Heart left ventricle (tissue), 16 donors: ENCODE measurements at regions of chr10 and their contacts with region 1.

Region 1: GRCh38 chr10:92880233-92880861 is 32.0 kb downstream of the EXOC6 start:
- DNase-seq: peak in 1 of 5 donors; percentile 13
- ATAC-seq: peak in 3 of 4 donors; percentile 57 to 69 (median 59)
- H3K4me3 ChIP-seq: no peak overlapping the region
- H3K27ac ChIP-seq: no peak overlapping the region
- H3K4me1 ChIP-seq: peaks cover 0 to 31% (median 0%) of the 10 kb centered on the region in 12 donors
- H3K27me3 ChIP-seq: no peaks in the 10 kb centered on the region
- CTCF ChIP-seq: peak in 11 of 12 donors; percentile 33 to 76 (median 53)
- POLR2A ChIP-seq: no peak

Region 2: GRCh38 chr10:92517034-92517655 is 363.2 kb before region 1 on chr10:
- intact Hi-C with region 1: loop called (anchors 2 to 10 kb)
- DNase-seq: peak in 3 of 5 donors; percentile 55 to 69 (median 61)
- ATAC-seq: peak; percentile 73 to 85 (median 82)
- H3K4me3 ChIP-seq: no peak overlapping the region
- H3K27ac ChIP-seq: no peak overlapping the region
- H3K4me1 ChIP-seq: peaks cover 0 to 3% (median 0%) of the 10 kb centered on the region in 12 donors
- H3K27me3 ChIP-seq: no peaks in the 10 kb centered on the region
- CTCF ChIP-seq: peak; percentile 69 to 85 (median 80)
- POLR2A ChIP-seq: no peak

Region 3: GRCh38 chr10:92592761-92593618 is 287.4 kb before region 1 on chr10 and contains the start of gene KIF11:
- intact Hi-C with region 1: loop called in 3 of 10 experiments (anchors 5 to 10 kb)
- DNase-seq: peak; percentile 97 to 99 (median 98)
- ATAC-seq: peak; percentile 96 to 97 (median 96)
- H3K4me3 ChIP-seq: peak within 1 kb of the TSS; percentile 35 to 94 (median 69)
- H3K27ac ChIP-seq: peak within 1 kb of the TSS; percentile 75 to 97 (median 93)
- H3K4me1 ChIP-seq: peaks cover 0 to 29% (median 12%) of the 10 kb centered on the region in 12 donors
- H3K27me3 ChIP-seq: no peaks in the 10 kb centered on the region
- CTCF ChIP-seq: peak in 1 of 12 donors; percentile 11
- POLR2A ChIP-seq: peak in 1 of 2 donors; percentile 80
- total RNA-seq, gene KIF11: 0.13 to 7.0 (median 0.76) TPM

Region 4: GRCh38 chr10:92839191-92840085 is 40.9 kb before region 1 on chr10:
- intact Hi-C with region 1: loop called in 8 of 10 experiments (anchors 5 kb)
- DNase-seq: peak; percentile 62 to 88 (median 69)
- ATAC-seq: peak in 3 of 4 donors; percentile 20 to 71 (median 46)
- H3K4me3 ChIP-seq: no peak overlapping the region
- H3K27ac ChIP-seq: peak overlapping the region in 9 of 12 donors; percentile 19 to 75 (median 63)
- H3K4me1 ChIP-seq: peaks cover 0 to 23% (median 9%) of the 10 kb centered on the region in 12 donors
- H3K27me3 ChIP-seq: no peaks in the 10 kb centered on the region
- CTCF ChIP-seq: peak in 7 of 12 donors; percentile 26 to 52 (median 38)
- POLR2A ChIP-seq: no peak

Region 5: DNA sequence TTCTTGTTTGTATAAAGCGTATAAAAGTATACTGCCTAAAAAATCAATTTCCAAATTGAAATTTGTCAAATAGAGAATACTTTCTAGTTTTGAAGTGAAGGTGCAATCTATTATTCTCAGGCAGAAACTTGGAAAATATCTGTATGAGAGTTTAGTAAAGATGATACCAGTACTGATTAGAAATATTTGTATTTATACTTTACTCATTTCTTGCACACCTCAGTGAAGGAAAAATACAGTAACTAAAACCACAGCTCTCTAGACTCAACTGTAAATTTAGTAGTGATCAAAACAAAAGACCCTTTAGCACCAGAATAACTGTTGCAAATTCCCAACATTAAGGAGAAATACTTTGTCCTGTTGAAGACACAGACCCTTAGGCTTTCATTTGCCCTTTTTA is 108.9 kb after region 1 on chr10:
- intact Hi-C with region 1: no loop called
- DNase-seq: no peak
- ATAC-seq: no peak
- H3K4me3 ChIP-seq: no peak overlapping the region
- H3K27ac ChIP-seq: no peak overlapping the region
- H3K4me1 ChIP-seq: no peaks in the 10 kb centered on the region
- H3K27me3 ChIP-seq: no peaks in the 10 kb centered on the region
- CTCF ChIP-seq: no peak
- POLR2A ChIP-seq: no peak

Region 6: GRCh38 chr10:93006435-93007039 is 126.2 kb after region 1 on chr10:
- intact Hi-C with region 1: loop called in 1 of 10 experiments (anchors 2 kb)
- DNase-seq: no peak
- ATAC-seq: no peak
- H3K4me3 ChIP-seq: no peak overlapping the region
- H3K27ac ChIP-seq: no peak overlapping the region
- H3K4me1 ChIP-seq: no peaks in the 10 kb centered on the region
- H3K27me3 ChIP-seq: no peaks in the 10 kb centered on the region
- CTCF ChIP-seq: peak; percentile 15 to 63 (median 48)
- POLR2A ChIP-seq: no peak

Region 7: GRCh38 chr10:93074147-93074596 is 193.8 kb after region 1 on chr10:
- intact Hi-C with region 1: no loop called
- DNase-seq: no peak
- ATAC-seq: peak in 1 of 4 donors; percentile 7
- H3K4me3 ChIP-seq: peak overlapping the region; percentile 23 to 49 (median 39)
- H3K27ac ChIP-seq: no peak overlapping the region
- H3K4me1 ChIP-seq: peaks cover 5 to 38% (median 25%) of the 10 kb centered on the region in 12 donors
- H3K27me3 ChIP-seq: peaks cover 23 to 94% (median 65%) of the 10 kb centered on the region in 9 donors
- CTCF ChIP-seq: peak in 1 of 12 donors; percentile 15
- POLR2A ChIP-seq: no peak

Region 8: GRCh38 chr10:93352638-93353383 is 472.5 kb after region 1 on chr10:
- intact Hi-C with region 1: loop called in 6 of 10 experiments (anchors 5 to 10 kb)
- DNase-seq: no peak
- ATAC-seq: no peak
- H3K4me3 ChIP-seq: no peak overlapping the region
- H3K27ac ChIP-seq: no peak overlapping the region
- H3K4me1 ChIP-seq: no peaks in the 10 kb centered on the region
- H3K27me3 ChIP-seq: no peaks in the 10 kb centered on the region
- CTCF ChIP-seq: peak; percentile 62 to 80 (median 73)
- POLR2A ChIP-seq: no peak